Activated CD8-positive, alpha-beta T cell treated with anti-CD3 and anti-CD28 coated beads for 36 hours (primary cell): ENCODE measurements at regions of chr1 and their contacts with region 1.

Region 1: DNA sequence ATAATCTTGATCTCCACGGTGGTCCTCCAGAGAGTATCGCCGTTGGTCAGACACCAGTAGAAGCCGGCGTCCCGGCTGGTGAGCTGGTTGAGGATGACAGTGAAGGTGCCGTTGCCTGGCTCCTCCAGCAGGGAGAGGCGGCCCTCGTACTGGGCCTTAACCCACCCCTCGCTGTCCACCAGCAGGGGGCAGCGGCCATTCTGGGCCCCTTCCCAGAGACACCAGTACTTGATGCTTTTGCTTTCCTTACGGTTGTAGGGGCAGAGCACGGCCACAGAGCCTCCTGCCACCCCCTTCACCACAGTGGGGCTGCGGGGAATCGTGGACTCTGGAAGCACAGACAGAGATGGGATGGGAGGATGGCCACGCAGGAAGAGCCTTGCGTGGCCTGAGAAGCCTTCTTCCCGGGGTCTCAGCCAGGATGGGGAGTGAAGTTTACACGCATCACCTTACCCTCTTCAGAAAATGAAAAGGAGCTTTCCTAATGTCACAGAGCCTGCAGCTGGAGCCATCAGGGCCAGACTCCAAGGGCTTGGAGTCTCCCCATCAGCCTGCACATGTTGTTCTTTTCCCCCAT is 10.7 kb downstream of the PIGR start:
- DNase-seq: peak; percentile 71
- ATAC-seq: peak; percentile 58
- H3K4me3 Mint-ChIP-seq: no peak overlapping the region
- H3K27ac Mint-ChIP-seq: no peak overlapping the region
- H3K4me1 Mint-ChIP-seq: peaks cover 24% of the 10 kb centered on the region
- H3K27me3 Mint-ChIP-seq: no peaks in the 10 kb centered on the region
- CTCF ChIP-seq: peak; percentile 75

Region 2: DNA sequence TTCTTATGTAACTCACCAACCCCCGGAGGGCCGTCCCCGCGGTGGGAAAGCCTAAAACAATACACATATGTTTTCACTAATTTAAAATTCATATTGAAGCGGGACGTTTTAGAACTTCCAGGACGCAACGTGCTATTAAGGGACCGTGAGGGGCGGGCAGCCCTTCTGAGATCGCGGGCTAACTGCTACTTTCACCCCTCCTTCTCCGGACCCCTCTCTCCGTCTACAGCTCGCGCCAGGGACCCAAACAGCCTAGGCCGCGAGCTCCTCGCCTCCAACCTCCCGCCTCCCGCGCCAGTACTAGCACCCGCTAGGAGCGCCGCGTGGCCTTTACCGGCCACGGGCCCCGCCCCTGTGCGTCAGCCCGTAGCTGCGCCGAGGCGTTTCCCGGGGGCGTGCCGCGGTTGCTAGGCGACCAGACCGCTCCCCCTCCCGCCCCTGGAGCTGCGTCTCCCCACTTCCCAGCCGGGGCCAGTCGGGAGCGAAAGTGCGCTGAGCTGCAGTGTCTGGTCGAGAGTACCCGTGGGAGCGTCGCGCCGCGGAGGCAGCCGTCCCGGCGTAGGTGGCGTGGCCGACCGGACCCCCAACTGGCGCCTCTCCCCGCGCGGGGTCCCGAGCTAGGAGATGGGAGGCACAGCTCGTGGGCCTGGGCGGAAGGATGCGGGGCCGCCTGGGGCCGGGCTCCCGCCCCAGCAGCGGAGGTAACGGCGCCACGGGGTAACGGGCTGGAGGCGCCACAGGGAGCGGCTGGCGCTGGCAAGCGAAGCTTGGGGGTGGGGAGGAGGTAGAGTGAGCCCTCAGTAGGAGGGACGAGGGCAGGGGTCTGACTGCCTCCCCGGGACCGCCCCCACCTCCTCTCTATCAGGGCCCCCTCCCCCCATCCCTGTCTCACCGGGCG is 300.2 kb before region 1 on chr1 and contains the start of gene DYRK3:
- CTCF ChIA-PET with region 1: interaction called, 12 read pairs
- POLR2A ChIA-PET with region 1: no interaction called
- intact Hi-C with region 1: no loop called
- DNase-seq: peak; percentile 93
- ATAC-seq: peak; percentile 93
- H3K4me3 Mint-ChIP-seq: peak within 1 kb of the TSS; percentile 78
- H3K27ac Mint-ChIP-seq: peak within 1 kb of the TSS; percentile 88
- H3K4me1 Mint-ChIP-seq: peaks cover 25% of the 10 kb centered on the region
- H3K27me3 Mint-ChIP-seq: peaks cover 28% of the 10 kb centered on the region
- CTCF ChIP-seq: no peak
- total RNA-seq, gene DYRK3: 4.7 to 4.9 TPM

Region 3: DNA sequence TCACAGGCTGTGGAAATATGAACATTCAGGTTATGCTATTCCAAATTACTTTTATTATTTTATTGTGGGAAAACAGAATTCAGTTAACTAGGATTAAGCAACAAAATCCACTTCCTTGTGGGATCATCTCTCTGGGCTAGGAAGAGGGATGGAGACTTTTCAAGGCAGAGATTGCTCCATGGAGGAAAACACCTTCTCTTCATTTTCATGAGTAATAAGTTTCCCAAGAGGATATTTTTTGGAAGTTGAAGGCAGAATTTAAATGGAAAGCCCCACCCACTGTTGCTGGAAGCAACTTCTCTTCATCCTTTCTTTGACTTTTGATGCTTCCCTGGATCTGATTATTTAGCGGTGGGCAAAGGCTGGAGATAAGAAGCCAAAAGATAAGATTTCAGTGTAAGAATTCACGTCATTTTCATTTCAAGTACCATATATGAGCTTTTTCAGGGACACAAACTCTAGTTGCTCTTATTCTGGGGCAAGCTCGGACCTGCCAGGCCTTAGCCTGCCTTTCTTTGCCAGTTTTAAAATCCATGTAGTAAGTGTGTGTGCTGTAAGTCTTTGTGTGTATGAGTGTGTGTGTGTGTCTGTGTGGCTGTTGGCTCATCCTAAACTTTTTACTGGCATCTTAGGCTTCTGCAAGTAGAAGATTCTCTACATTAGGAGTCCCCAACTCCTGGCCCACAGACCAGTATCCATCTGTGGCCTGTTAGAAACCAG is 50.1 kb before region 1 on chr1:
- CTCF ChIA-PET with region 1: interaction called, 14 read pairs
- POLR2A ChIA-PET with region 1: no interaction called
- intact Hi-C with region 1: no loop called
- DNase-seq: no peak
- ATAC-seq: no peak
- H3K4me3 Mint-ChIP-seq: no peak overlapping the region
- H3K27ac Mint-ChIP-seq: no peak overlapping the region
- H3K4me1 Mint-ChIP-seq: peaks cover 18% of the 10 kb centered on the region
- H3K27me3 Mint-ChIP-seq: no peaks in the 10 kb centered on the region
- CTCF ChIP-seq: no peak

Region 4: GRCh38 chr1:206925106-206925736 is 10.4 kb before region 1 on chr1:
- CTCF ChIA-PET with region 1: interaction called, 289 read pairs
- POLR2A ChIA-PET with region 1: interaction called, 5 read pairs
- intact Hi-C with region 1: no loop called
- DNase-seq: peak; percentile 93
- ATAC-seq: peak; percentile 67
- H3K4me3 Mint-ChIP-seq: no peak overlapping the region
- H3K27ac Mint-ChIP-seq: no peak overlapping the region
- H3K4me1 Mint-ChIP-seq: peaks cover 41% of the 10 kb centered on the region
- H3K27me3 Mint-ChIP-seq: no peaks in the 10 kb centered on the region
- CTCF ChIP-seq: no peak

Region 5: GRCh38 chr1:206974140-206974539 is 38.6 kb after region 1 on chr1:
- CTCF ChIA-PET with region 1: interaction called, 182 read pairs
- POLR2A ChIA-PET with region 1: no interaction called
- intact Hi-C with region 1: no loop called
- DNase-seq: no peak
- ATAC-seq: no peak
- H3K4me3 Mint-ChIP-seq: no peak overlapping the region
- H3K27ac Mint-ChIP-seq: no peak overlapping the region
- H3K4me1 Mint-ChIP-seq: no peaks in the 10 kb centered on the region
- H3K27me3 Mint-ChIP-seq: peaks cover 6% of the 10 kb centered on the region
- CTCF ChIP-seq: no peak

Region 6: GRCh38 chr1:207328004-207328403 is 392.4 kb after region 1 on chr1:
- CTCF ChIA-PET with region 1: no interaction called
- POLR2A ChIA-PET with region 1: no interaction called
- intact Hi-C with region 1: no loop called
- DNase-seq: no peak
- ATAC-seq: no peak
- H3K4me3 Mint-ChIP-seq: no peak overlapping the region
- H3K27ac Mint-ChIP-seq: peak overlapping the region; percentile 70
- H3K4me1 Mint-ChIP-seq: peaks cover 61% of the 10 kb centered on the region
- H3K27me3 Mint-ChIP-seq: no peaks in the 10 kb centered on the region
- CTCF ChIP-seq: no peak